PC-9 (cell line): ENCODE measurements at regions of chr17 and their contacts with region 1.

Region 1: DNA sequence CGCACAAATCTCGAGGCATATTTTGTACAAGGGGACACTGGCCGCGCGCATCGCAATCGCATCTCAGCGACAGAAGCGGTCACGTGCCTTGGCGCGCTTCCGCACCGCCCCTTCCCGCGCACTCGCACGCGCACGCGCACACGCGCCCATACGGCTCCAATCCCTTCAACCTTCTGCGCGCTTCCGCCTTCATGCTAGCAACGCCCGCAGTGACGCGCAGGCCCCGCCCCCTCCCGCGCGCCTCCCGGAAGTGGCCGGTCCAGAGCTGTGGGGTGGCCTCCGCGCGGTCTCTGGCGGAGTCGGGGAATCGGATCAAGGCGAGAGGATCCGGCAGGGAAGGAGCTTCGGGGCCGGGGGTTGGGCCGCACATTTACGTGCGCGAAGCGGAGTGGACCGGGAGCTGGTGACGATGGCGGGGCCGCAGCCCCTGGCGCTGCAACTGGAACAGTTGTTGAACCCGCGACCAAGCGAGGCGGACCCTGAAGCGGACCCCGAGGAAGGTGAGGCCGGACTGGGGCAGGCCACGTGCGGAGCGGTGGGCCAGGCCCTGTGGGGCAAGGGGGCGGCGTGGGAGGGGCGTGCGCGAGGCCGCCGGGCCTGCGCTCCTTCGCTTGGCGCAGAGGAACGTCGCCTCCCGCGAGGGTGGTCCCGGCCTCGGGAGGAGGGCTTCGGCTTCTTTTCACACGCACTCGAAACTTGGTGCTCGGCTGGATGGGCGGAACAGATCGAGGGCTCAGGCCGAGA is at the start of gene AATF:
- DNase-seq: peak; percentile 86 to 96
- H3K4me3 ChIP-seq: peak within 1 kb of the TSS; percentile 88
- H3K27ac ChIP-seq: peak within 1 kb of the TSS; percentile 82
- H3K4me1 ChIP-seq: peaks cover 33% of the 10 kb centered on the region; the same call in 1 of the 2 replicates
- H3K27me3 ChIP-seq: no peaks in the 10 kb centered on the region
- CTCF ChIP-seq: no peak
- total RNA-seq, gene AATF: 71.4 and 79.6 TPM in 2 replicates

Region 2: DNA sequence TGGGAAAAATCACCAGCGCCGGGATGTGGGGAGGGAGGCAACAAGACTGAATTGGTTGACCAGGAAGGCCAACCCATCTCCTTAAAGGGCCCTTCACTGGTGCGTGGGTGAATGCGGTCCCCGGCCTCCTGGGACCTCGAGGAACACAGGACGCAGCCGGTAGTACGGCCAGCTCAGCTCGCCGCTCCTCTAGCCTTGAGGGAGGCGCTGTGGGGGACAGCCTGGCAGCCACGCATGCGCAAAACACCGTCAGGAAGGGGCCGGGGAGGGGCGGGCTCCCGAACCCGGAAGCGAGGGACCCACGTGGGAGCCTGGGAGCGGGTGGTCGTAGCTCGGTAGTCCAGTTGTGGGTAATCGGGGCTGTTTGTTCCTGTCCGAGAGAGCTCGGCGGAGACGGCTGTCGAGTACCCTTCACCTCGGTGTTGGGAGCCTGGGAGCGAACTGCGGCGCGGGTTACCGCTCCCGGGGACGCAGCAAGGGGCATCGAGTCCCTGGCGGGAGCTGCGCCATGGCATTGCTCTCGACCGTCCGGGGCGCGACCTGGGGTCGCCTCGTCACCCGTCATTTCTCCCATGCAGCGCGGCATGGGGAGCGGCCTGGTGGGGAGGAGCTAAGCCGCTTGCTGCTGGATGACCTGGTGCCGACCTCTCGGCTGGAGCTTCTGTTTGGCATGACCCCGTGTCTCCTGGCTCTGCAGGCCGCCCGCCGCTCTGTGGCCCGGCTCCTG is 347.4 kb before region 1 on chr17 and contains the start of gene MRM1:
- CTCF ChIA-PET with region 1: interaction called, 10 read pairs
- POLR2A ChIA-PET with region 1: no interaction called
- intact Hi-C with region 1: no loop called
- DNase-seq: peak; percentile 86 to 90
- H3K4me3 ChIP-seq: peak within 1 kb of the TSS; percentile 77
- H3K27ac ChIP-seq: peak within 1 kb of the TSS; percentile 65
- H3K4me1 ChIP-seq: peaks cover 8% of the 10 kb centered on the region; the same call in 1 of the 2 replicates
- H3K27me3 ChIP-seq: no peaks in the 10 kb centered on the region
- CTCF ChIP-seq: no peak
- total RNA-seq, gene MRM1: 9.6 and 10.9 TPM in 2 replicates

Region 3: DNA sequence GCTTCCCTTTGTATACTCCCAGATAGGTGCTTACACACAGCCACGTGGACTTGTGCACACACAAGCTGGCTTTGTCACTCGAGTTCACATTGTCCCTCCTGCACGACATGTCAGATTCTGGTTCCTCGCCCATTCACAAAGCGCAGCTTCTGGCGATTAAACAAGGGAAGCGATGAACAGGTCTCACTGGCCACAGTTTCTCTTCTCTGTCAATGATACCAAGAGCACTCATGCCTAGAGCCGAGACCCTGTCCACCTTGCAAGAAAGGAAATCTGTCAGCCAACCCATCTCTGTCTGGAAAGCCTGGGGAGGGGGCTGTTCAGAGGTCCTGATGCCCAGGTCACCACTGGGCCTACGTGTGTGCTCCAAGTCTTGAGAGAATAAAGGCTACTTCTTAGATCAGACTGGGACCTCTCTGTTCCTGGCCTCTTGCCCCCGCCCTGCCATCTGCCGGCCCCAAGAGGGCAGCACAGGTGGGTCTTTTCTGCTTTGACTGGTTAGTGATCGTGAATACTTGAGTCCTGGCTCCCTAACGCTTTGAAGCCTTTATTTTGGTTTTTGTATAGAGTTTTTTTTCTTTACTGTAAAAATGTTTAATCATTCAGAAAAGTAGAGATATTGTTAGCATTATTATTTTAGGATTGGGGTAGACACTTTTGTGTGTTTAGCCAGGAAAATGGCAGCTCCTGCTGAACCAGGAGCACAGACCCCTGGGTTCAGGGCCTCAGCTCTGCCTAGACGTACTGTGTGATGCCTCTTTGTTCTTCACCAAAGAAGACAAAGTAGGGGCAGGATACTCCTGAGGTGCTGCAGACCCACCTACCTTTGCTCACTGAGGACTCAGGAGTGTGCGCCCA is 242.8 kb before region 1 on chr17:
- CTCF ChIA-PET with region 1: no interaction called
- POLR2A ChIA-PET with region 1: no interaction called
- intact Hi-C with region 1: loop called (anchors 5 kb)
- DNase-seq: peak in 1 of 2 experiments; percentile 44
- H3K4me3 ChIP-seq: no peak overlapping the region
- H3K27ac ChIP-seq: no peak overlapping the region
- H3K4me1 ChIP-seq: 0 out of 2 replicates have a peak, but pooled peaks cover 5% of the 10 kb centered on the region
- H3K27me3 ChIP-seq: peaks cover 11% of the 10 kb centered on the region
- CTCF ChIP-seq: peak; percentile 79

Region 4: GRCh38 chr17:36888236-36888951 is 60.5 kb before region 1 on chr17:
- CTCF ChIA-PET with region 1: no interaction called
- POLR2A ChIA-PET with region 1: no interaction called
- intact Hi-C with region 1: no loop called
- DNase-seq: no peak
- H3K4me3 ChIP-seq: no peak overlapping the region
- H3K27ac ChIP-seq: no peak overlapping the region
- H3K4me1 ChIP-seq: no peaks in the 10 kb centered on the region
- H3K27me3 ChIP-seq: no peaks in the 10 kb centered on the region
- CTCF ChIP-seq: no peak

Region 5: GRCh38 chr17:36937966-36938565 is 10.8 kb before region 1 on chr17:
- CTCF ChIA-PET with region 1: no interaction called
- POLR2A ChIA-PET with region 1: interaction called, 4 read pairs
- intact Hi-C with region 1: loop called (anchors 1 kb)
- DNase-seq: peak; percentile 53 to 68
- H3K4me3 ChIP-seq: peak overlapping the region; percentile 82
- H3K27ac ChIP-seq: 0 out of 2 replicates have a peak overlapping the region, but pooled peaks have one; percentile 8
- H3K4me1 ChIP-seq: peaks cover 14% of the 10 kb centered on the region
- H3K27me3 ChIP-seq: no peaks in the 10 kb centered on the region
- CTCF ChIP-seq: no peak

Region 6: DNA sequence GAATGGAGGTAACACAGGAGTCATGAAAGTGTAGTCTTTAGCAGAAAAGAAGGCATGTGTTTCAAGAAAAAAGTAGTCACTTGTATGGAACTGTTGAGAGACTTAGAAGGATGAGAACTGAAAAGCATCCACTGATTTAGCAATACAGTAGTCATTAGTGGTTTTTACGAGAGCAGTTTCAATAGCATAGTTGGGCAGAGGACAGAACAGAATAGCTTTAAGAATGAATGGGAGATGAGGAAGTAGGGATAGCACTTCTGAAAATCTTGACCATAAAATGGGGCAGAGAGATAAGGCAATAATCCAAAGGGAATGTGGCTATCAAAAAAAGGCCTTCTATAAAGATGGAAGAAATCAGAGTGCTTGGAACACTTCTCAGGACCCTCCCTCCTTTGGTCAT is 362.1 kb after region 1 on chr17:
- CTCF ChIA-PET with region 1: no interaction called
- POLR2A ChIA-PET with region 1: no interaction called
- intact Hi-C with region 1: no loop called
- DNase-seq: no peak
- H3K4me3 ChIP-seq: no peak overlapping the region
- H3K27ac ChIP-seq: no peak overlapping the region
- H3K4me1 ChIP-seq: no peaks in the 10 kb centered on the region
- H3K27me3 ChIP-seq: no peaks in the 10 kb centered on the region
- CTCF ChIP-seq: no peak